ENCODE measurements at regions of chr15 and their contacts with region 1.

Region 1: DNA sequence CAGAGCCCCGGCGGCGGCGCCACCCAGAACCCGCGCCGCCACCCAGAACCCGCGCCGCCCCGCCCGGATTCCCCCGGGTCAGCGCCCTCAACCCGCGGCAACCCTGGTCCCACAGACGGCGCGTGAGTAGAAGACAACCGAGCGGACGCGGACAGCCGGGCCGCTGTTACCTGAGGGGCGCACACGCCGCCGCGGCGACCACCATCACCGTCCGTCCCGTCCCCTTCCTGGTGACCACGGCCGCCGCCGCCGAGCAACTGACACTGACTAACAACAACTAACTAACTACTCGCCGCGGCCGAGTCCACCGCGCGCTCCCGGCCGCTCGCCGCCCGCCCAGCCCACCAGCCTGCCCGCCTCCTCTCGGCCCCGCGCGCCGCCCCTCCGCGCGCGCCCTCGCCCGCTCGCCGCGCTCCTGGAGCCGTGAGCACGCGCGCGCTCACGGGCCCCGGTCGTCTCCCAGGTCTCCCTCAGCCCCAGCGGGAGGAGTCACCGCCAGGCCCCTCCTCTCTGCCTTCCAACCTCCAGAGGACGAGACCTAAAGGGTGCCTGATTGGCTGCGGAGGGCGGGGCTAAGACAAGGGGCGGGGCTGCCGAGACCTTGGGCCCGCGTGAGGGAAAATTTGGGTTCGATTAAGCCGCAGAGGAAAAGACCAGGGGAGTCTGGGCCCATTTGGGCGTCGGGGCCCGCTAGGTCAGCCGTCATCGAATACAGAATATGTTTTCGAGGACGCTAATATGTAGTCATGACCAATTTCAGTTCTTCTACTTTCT is at the start of gene PEAK1:
- DNase-seq: peak; percentile 100
- H3K4me3 ChIP-seq: peak within 1 kb of the TSS; percentile 88 to 95 (median 90)
- H3K27ac ChIP-seq: peak within 1 kb of the TSS; percentile 93 to 97 (median 96)
- H3K4me1 ChIP-seq: peaks cover 0 to 57% (median 45%) of the 10 kb centered on the region in 4 donors
- H3K27me3 ChIP-seq: no peaks in the 10 kb centered on the region
- CTCF ChIP-seq: no peak
- EP300 ChIP-seq: no peak
- POLR2A ChIP-seq: peak; percentile 52 to 70
- total RNA-seq, gene PEAK1: 29.3 to 59.8 (median 33.3) TPM

Region 2: GRCh38 chr15:77070495-77071304 is 349.3 kb before region 1 on chr15 and contains the start of gene TSPAN3:
- intact Hi-C with region 1: loop called (anchors 2 kb)
- DNase-seq: peak; percentile 95
- H3K4me3 ChIP-seq: peak within 1 kb of the TSS; percentile 66 to 97 (median 86)
- H3K27ac ChIP-seq: peak within 1 kb of the TSS; percentile 93 to 99 (median 94)
- H3K4me1 ChIP-seq: peaks cover 0 to 46% (median 34%) of the 10 kb centered on the region in 4 donors
- H3K27me3 ChIP-seq: no peaks in the 10 kb centered on the region
- CTCF ChIP-seq: no peak
- EP300 ChIP-seq: no peak
- POLR2A ChIP-seq: peak in 1 of 2 donors; percentile 12
- total RNA-seq, gene TSPAN3: 129 to 220 (median 157) TPM

Region 3: GRCh38 chr15:77526791-77527778 is 107.1 kb after region 1 on chr15:
- intact Hi-C with region 1: no loop called
- DNase-seq: peak; percentile 53
- H3K4me3 ChIP-seq: no peak overlapping the region
- H3K27ac ChIP-seq: peak overlapping the region in 1 of 4 donors; percentile 21
- H3K4me1 ChIP-seq: peaks cover 0 to 12% (median 6%) of the 10 kb centered on the region in 4 donors
- H3K27me3 ChIP-seq: no peaks in the 10 kb centered on the region
- CTCF ChIP-seq: no peak
- EP300 ChIP-seq: no peak
- POLR2A ChIP-seq: no peak

Measured in sigmoid colon (tissue), 7 donors.